PC-9 (cell line): ENCODE measurements at regions of chr16 and their contacts with region 1.

Region 1: GRCh38 chr16:20900299-20901067 is at the starts of genes DCUN1D3 and LYRM1:
- DNase-seq: peak; percentile 90 to 94
- H3K4me3 ChIP-seq: peak within 1 kb of the TSS; percentile 84
- H3K27ac ChIP-seq: peak within 1 kb of the TSS; percentile 99
- H3K4me1 ChIP-seq: peaks cover 65% of the 10 kb centered on the region
- H3K27me3 ChIP-seq: no peaks in the 10 kb centered on the region
- CTCF ChIP-seq: no peak
- total RNA-seq, gene DCUN1D3: 11.8 and 14.6 TPM in 2 replicates
- total RNA-seq, gene LYRM1: 32.2 and 51.7 TPM in 2 replicates

Region 2: GRCh38 chr16:20806168-20807050 is 94.1 kb before region 1 on chr16 and contains the starts of genes ERI2 and REXO5:
- CTCF ChIA-PET with region 1: no interaction called
- POLR2A ChIA-PET with region 1: interaction called, 7 read pairs
- intact Hi-C with region 1: loop called (anchors 1 kb)
- DNase-seq: peak; percentile 89 to 96
- H3K4me3 ChIP-seq: peak within 1 kb of the TSS; percentile 77
- H3K27ac ChIP-seq: peak within 1 kb of the TSS; percentile 47
- H3K4me1 ChIP-seq: peaks cover 10% of the 10 kb centered on the region; the same call in 1 of the 2 replicates
- H3K27me3 ChIP-seq: no peaks in the 10 kb centered on the region
- CTCF ChIP-seq: peak; percentile 53
- total RNA-seq, gene ERI2: 25.6 and 29.5 TPM in 2 replicates
- total RNA-seq, gene REXO5: 9.5 and 13.2 TPM in 2 replicates

Region 3: GRCh38 chr16:20838240-20838639 is 62.2 kb before region 1 on chr16:
- CTCF ChIA-PET with region 1: no interaction called
- POLR2A ChIA-PET with region 1: no interaction called
- intact Hi-C with region 1: no loop called
- DNase-seq: no peak
- H3K4me3 ChIP-seq: no peak overlapping the region
- H3K27ac ChIP-seq: no peak overlapping the region
- H3K4me1 ChIP-seq: no peaks in the 10 kb centered on the region
- H3K27me3 ChIP-seq: no peaks in the 10 kb centered on the region
- CTCF ChIP-seq: no peak

Region 4: DNA sequence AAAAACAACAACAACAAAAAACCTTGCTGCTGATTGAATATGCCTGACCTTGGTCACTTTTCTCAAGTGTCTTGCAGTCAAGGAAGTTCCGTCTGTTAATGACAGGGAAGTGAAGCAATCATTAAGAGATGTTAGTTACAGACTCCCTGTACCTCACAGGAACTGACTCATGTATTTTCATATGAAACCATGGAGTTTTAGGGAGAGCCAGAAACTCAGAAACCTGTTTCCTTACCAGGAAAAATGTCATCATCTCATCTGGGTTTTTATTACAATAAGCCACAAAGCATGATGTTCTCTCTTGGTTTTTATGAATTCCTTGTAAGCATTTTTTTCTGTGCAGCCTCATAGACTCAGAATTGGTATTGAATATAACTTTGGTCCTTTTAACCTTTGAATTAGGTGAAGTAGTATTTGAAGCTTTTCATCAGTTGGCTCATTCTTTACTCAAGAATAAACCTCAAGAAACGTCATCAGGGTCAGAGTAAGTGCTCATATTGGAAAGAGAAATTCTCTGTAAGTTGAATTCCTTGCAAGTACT is 10.4 kb after region 1 on chr16:
- CTCF ChIA-PET with region 1: no interaction called
- POLR2A ChIA-PET with region 1: interaction called, 3 read pairs
- intact Hi-C with region 1: loop called (anchors 1 kb)
- DNase-seq: peak; percentile 20 to 99
- H3K4me3 ChIP-seq: peak overlapping the region; percentile 18; the same call in 1 of the 2 replicates
- H3K27ac ChIP-seq: peak overlapping the region; percentile 99
- H3K4me1 ChIP-seq: peaks cover 88% of the 10 kb centered on the region
- H3K27me3 ChIP-seq: no peaks in the 10 kb centered on the region
- CTCF ChIP-seq: no peak

Region 5: DNA sequence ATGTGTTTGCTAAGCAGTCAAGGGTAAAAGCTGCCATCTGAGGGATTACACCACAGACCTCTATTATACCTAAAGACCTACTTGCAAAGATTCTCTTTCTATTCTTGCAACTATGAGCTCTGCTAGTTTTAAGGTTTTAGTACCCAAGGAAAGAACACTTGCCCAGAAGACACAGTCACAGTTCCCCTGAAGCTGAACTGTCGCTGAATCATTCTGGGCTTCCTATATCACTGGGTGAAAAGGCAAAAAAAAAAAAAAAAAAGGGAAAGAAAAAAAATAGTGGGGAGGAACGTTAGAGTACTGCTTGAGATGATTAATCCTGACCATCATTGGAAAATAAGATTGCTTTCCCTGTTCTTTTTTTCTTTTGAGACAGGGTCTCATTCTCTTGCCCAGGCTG is 37.9 kb after region 1 on chr16:
- CTCF ChIA-PET with region 1: no interaction called
- POLR2A ChIA-PET with region 1: interaction called, 5 read pairs
- intact Hi-C with region 1: loop called (anchors 2 kb)
- DNase-seq: peak; percentile 38 to 87
- H3K4me3 ChIP-seq: peak overlapping the region; percentile 22; the same call in 1 of the 2 replicates
- H3K27ac ChIP-seq: peak overlapping the region; percentile 95
- H3K4me1 ChIP-seq: peaks cover 31% of the 10 kb centered on the region
- H3K27me3 ChIP-seq: no peaks in the 10 kb centered on the region
- CTCF ChIP-seq: no peak

Region 6: GRCh38 chr16:20952159-20952920 is 51.9 kb after region 1 on chr16:
- CTCF ChIA-PET with region 1: no interaction called
- POLR2A ChIA-PET with region 1: interaction called, 8 read pairs
- intact Hi-C with region 1: loop called (anchors 5 kb)
- DNase-seq: peak; percentile 53 to 93
- H3K4me3 ChIP-seq: no peak overlapping the region
- H3K27ac ChIP-seq: peak overlapping the region; percentile 42
- H3K4me1 ChIP-seq: peaks cover 8% of the 10 kb centered on the region
- H3K27me3 ChIP-seq: no peaks in the 10 kb centered on the region
- CTCF ChIP-seq: no peak

Region 7: GRCh38 chr16:20987049-20987448 is 86.6 kb after region 1 on chr16:
- CTCF ChIA-PET with region 1: no interaction called
- POLR2A ChIA-PET with region 1: interaction called, 11 read pairs
- intact Hi-C with region 1: no loop called
- DNase-seq: no peak
- H3K4me3 ChIP-seq: no peak overlapping the region
- H3K27ac ChIP-seq: no peak overlapping the region
- H3K4me1 ChIP-seq: no peaks in the 10 kb centered on the region
- H3K27me3 ChIP-seq: no peaks in the 10 kb centered on the region
- CTCF ChIP-seq: no peak

Region 8: GRCh38 chr16:21300309-21301167 is 400.1 kb after region 1 on chr16:
- CTCF ChIA-PET with region 1: no interaction called
- POLR2A ChIA-PET with region 1: no interaction called
- intact Hi-C with region 1: loop called (anchors 5 kb)
- DNase-seq: peak; percentile 98 to 100
- H3K4me3 ChIP-seq: peak overlapping the region; percentile 88
- H3K27ac ChIP-seq: peak overlapping the region; percentile 85
- H3K4me1 ChIP-seq: peaks cover 27% of the 10 kb centered on the region
- H3K27me3 ChIP-seq: no peaks in the 10 kb centered on the region
- CTCF ChIP-seq: peak; percentile 80